ENCODE measurements at regions of chr1 and their contacts with region 1.

Region 1: GRCh38 chr1:246689409-246690008 is 34.7 kb upstream of the SCCPDH start:
- DNase-seq: peak; percentile 64
- ATAC-seq: peak; percentile 96
- H3K4me3 Mint-ChIP-seq: no peak overlapping the region
- H3K27ac Mint-ChIP-seq: no peak overlapping the region
- H3K4me1 Mint-ChIP-seq: no peaks in the 10 kb centered on the region
- H3K27me3 Mint-ChIP-seq: no peaks in the 10 kb centered on the region

Region 2: GRCh38 chr1:246753670-246754535 is 64.4 kb after region 1 on chr1:
- CTCF ChIA-PET with region 1: interaction called, 16 read pairs
- DNase-seq: peak; percentile 73
- ATAC-seq: peak; percentile 77
- H3K4me3 Mint-ChIP-seq: no peak overlapping the region
- H3K27ac Mint-ChIP-seq: no peak overlapping the region
- H3K4me1 Mint-ChIP-seq: no peaks in the 10 kb centered on the region
- H3K27me3 Mint-ChIP-seq: no peaks in the 10 kb centered on the region

Region 3: DNA sequence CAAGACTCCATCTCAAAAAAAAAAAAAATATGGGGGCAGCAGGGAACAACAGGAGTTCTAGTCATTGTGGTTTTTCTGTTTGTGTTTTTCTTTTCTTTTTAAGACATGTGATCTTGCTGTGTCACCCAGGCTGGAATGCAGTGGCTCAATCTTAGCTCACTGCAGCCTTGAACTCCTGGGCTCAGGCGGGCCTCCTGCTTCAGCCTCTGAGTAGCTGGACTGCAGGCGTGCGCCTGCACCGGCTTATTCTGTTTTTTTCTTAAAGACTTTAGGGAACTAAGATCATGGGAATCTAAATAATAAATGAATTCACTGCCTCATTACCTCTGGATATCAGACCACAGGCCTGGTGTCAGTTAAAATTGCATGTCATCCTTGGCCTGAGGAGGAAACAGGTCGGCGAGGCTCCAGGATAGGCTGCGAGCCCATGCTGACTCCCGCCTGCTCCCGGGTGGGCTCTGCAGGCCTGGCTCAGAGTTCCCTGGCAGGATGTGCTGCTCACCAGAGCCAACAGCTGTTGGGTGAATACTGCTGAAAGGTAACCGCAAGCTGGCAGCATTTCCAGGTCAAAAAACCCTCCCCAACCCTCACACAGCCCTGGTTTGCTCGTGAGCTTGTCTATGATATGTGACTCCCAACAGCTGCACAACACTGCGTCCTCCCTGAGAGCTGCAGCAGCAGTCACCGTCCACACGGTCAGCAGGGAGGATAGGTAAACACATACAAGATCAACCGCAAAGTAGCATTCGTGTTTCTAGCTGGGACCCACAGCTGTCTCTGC is 92.8 kb after region 1 on chr1:
- CTCF ChIA-PET with region 1: no interaction called
- DNase-seq: no peak
- ATAC-seq: no peak
- H3K4me3 Mint-ChIP-seq: no peak overlapping the region
- H3K27ac Mint-ChIP-seq: no peak overlapping the region
- H3K4me1 Mint-ChIP-seq: peaks cover 6% of the 10 kb centered on the region
- H3K27me3 Mint-ChIP-seq: no peaks in the 10 kb centered on the region